K562 (cell line): ENCODE measurements at regions of chr13 and their contacts with region 1.

Region 1: GRCh38 chr13:98476538-98476966 is 100.4 kb downstream of the STK24 start:
- DNase-seq: peak; percentile 33 to 79 (median 60)
- ATAC-seq: peak; percentile 82
- H3K4me3 ChIP-seq: no peak overlapping the region
- H3K27ac ChIP-seq: peak overlapping the region; percentile 70
- H3K4me1 ChIP-seq: peaks cover 36 to 44% of the 10 kb centered on the region in 2 experiments
- H3K27me3 ChIP-seq: no peaks in the 10 kb centered on the region
- CTCF ChIP-seq: no peak
- EP300 ChIP-seq: no peak
- POLR2A ChIP-seq: no peak
- RAD21 ChIP-seq: no peak

Region 2: GRCh38 chr13:98570929-98571372 is 94.4 kb after region 1 on chr13:
- CTCF ChIA-PET with region 1: no interaction called
- POLR2A ChIA-PET with region 1: no interaction called
- in situ Hi-C with region 1: no loop called
- intact Hi-C with region 1: loop called (anchors 5 kb)
- DNase-seq: peak in 2 of 4 experiments; percentile 21 to 29
- ATAC-seq: peak; percentile 40
- H3K4me3 ChIP-seq: peak overlapping the region; percentile 3; the same call in 1 of the 2 replicates
- H3K27ac ChIP-seq: no peak overlapping the region; the same call in 2 of the 3 replicates
- H3K4me1 ChIP-seq: peaks cover 29 to 37% of the 10 kb centered on the region in 2 experiments
- H3K27me3 ChIP-seq: no peaks in the 10 kb centered on the region
- CTCF ChIP-seq: no peak
- EP300 ChIP-seq: no peak
- POLR2A ChIP-seq: no peak
- RAD21 ChIP-seq: no peak